ENCODE measurements at regions of chr3 and their contacts with region 1.

Region 1: DNA sequence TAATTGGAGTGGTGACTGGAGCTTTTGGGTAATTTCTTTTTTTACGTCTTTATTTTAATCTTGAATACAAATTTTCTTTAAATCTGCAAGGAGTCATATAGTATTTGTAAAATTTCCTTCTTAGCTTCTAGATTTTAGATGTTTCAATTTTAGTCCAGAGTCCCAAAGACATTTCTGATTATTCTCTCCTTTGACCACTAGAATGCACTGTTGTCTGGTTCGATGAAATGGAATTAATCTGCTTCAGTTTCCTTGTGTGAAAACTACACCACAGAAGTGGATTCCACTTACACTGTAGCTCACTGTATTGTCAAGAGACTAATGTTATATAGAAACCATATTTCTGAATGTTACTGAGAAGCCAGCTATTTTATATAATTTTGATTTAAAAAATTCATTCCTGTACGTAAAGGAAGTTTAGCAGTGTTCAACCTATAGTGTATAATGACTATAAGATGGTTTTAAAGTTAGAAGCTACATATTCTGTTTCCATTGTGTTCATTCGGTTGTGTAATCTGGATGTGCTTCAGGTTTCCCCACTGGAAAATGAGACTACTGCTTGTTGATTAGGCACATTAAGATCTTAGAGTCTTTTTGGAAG is 6.1 kb downstream of the GRAMD1C start:
- DNase-seq: no peak
- H3K4me3 ChIP-seq: no peak overlapping the region
- CTCF ChIP-seq: peak; percentile 44

Region 2: GRCh38 chr3:113736548-113737089 is 108.1 kb before region 1 on chr3:
- CTCF ChIA-PET with region 1: interaction called, 76 read pairs
- POLR2A ChIA-PET with region 1: no interaction called
- DNase-seq: no peak
- H3K4me3 ChIP-seq: no peak overlapping the region
- CTCF ChIP-seq: peak; percentile 23

Region 3: GRCh38 chr3:113897373-113897777 is 52.7 kb after region 1 on chr3:
- CTCF ChIA-PET with region 1: interaction called, 14 read pairs
- POLR2A ChIA-PET with region 1: no interaction called
- DNase-seq: no peak
- H3K4me3 ChIP-seq: no peak overlapping the region
- CTCF ChIP-seq: no peak

Region 4: DNA sequence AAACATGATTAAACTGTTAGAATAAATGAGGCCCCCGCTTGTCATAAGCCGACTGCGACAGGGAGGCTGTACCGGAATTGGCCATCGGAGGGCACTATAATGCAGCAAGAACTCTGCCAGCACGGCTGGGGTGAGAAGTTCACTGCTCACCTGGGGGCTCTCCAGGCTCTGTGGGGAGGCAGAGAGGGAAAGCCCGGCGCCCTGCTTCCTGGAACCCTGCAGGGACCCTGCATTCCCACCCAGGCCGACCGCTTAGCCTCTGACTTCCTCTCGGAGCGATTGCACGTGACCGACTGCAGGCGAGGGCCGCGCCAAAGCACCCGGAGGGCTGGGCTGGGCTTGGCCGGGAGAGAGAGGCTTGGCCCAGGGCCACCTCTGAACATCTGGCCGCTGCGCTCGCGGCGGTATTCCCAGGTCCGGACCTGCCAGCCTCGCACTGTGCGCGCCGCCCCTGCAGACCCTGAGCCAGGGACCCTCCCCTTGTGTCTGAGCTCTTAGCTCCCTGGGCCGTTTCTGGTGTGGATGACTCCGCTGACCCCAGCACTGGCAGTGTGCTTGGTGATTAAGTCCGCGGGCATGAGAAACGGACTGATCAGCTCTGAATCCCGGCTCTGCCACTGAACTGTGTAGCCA is 307.9 kb after region 1 on chr3:
- CTCF ChIA-PET with region 1: interaction called, 80 read pairs
- POLR2A ChIA-PET with region 1: no interaction called
- DNase-seq: no peak
- H3K4me3 ChIP-seq: peak overlapping the region; percentile 60
- CTCF ChIP-seq: peak; percentile 87

Region 5: GRCh38 chr3:114336122-114336697 is 491.5 kb after region 1 on chr3:
- CTCF ChIA-PET with region 1: interaction called, 10 read pairs
- POLR2A ChIA-PET with region 1: no interaction called
- DNase-seq: no peak
- H3K4me3 ChIP-seq: no peak overlapping the region
- CTCF ChIP-seq: peak; percentile 20

Measured in AG04449 (cell line).